Left ventricle myocardium superior (tissue), 1 donor: ENCODE measurements at regions of chr6 and their contacts with region 1.

Region 1: DNA sequence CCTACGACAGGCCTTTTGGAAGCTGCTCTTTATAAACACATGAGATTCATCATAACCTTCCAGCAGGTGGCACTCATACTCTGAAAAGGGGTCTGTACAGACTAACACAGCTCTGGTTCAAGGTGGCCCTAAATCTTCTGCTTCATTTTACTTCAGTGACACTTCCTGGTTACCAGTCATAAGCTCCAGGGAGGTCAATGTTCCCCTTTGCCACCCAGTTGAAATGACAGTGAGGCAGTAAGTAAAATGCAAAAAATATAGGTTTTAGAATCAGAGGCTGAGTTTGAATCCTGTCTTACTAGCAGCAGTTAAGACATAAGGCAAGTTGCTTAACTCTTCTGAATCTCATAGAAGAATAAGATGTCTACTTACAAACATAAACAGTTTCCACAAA is 132.8 kb downstream of the CDK19 start:
- DNase-seq: no peak
- ATAC-seq: peak; percentile 97

Region 2: GRCh38 chr6:110255211-110255755 is 427.2 kb before region 1 on chr6:
- intact Hi-C with region 1: no loop called
- DNase-seq: peak; percentile 27
- ATAC-seq: no peak

Region 3: GRCh38 chr6:110728501-110728900 is 46.0 kb after region 1 on chr6:
- intact Hi-C with region 1: no loop called
- DNase-seq: no peak
- ATAC-seq: no peak

Region 4: DNA sequence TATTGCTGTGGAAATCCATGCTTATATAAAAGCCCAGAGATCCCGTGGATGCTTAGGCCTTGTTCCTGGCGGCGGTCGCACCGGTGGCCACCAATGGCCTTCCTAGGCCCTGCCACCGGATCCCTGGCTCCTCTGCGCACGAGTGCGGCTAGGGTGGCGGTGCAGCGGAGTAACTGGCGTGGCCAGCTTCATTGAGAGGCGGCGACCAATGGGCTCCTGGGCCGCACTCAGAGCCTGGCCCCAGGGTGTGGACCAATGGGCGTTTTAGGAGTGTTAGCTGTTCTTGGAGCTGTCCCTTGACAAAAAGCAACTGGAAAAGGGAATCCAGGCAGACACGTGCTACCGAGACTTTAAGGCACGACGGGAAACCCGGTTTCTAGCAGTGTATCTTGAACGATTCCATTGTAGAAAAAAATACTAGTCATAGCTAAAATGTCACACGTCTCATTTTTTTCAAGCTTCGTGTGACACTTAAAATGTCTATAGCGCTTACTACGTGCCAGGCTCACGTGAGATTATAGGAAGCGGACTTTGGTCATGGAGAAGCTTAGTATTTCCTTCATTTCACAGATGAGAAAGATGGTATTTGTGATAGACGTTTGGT is 193.8 kb after region 1 on chr6:
- intact Hi-C with region 1: loop called (anchors 5 kb)
- DNase-seq: peak; percentile 92
- ATAC-seq: peak; percentile 84

Region 5: DNA sequence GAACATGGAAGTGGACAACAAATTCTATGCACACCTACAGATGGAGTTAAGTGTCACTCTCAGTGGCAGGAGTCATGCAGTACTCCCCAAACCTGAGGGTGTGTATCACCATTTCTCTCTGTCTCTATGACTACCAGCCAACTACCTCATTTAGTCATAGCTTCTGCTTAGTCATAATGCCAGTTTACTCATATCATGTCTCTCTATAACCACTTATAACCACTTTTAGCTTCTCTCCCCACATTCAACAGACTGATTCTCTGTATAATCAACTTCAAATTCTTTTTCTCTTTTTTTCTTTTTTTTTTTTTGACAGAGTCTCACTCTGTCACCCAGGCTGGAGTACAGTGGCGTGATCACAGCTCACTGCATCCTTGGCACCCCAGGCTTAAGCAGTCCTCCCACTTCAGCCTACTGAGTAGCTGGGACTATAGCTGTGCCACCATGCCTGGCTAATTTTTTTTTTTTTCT is 262.3 kb after region 1 on chr6:
- intact Hi-C with region 1: loop called (anchors 5 kb)
- DNase-seq: no peak
- ATAC-seq: no peak